ENCODE measurements at regions of chr7 and their contacts with region 1.

Region 1: DNA sequence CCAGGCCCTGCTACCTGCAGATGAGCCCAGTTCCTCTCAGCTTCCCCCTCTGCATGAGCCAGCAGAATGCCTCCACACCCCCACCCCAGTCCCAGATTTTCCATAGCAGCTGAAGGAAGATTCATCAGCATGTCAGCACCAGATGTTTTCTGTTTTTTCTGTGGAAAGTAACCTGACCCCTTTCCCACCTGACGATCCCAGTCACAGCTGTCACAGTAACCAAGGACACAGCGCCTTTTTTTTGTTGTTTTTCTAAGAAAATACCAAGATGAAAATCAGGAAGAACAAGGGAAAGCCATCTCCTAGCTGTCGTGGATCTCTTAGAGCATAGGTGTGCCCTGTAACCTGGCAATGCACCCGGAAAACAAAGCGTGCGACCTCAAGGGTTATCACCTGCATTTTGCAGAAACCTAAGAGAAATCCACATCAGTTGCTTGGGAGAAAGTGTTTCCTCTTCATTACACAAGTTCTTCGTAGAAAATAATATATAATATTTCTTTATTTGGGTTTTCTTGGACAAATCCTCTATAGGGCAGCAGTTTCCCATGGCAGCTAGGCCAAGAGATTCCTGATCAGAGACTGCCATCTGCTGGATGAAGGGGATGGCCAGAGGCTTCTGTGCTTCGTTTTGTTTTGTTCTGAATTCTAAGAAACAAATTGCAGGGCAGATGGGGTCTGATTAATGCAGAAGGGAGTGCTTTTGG is 401.9 kb downstream of the TNS3 start:
- DNase-seq: peak; percentile 42 to 70 (median 56)
- H3K4me3 ChIP-seq: no peak overlapping the region
- H3K27ac ChIP-seq: no peak overlapping the region
- H3K4me1 ChIP-seq: peaks cover 0 to 3% (median 0%) of the 10 kb centered on the region in 4 experiments
- H3K27me3 ChIP-seq: peaks cover 0 to 9% (median 0%) of the 10 kb centered on the region in 5 experiments

Region 2: GRCh38 chr7:45917658-45918057 is 1262.3 kb before region 1 on chr7:
- CTCF ChIA-PET with region 1: interaction called, 48 read pairs
- POLR2A ChIA-PET with region 1: no interaction called
- DNase-seq: peak; percentile 50 to 78 (median 68)
- H3K4me3 ChIP-seq: no peak overlapping the region
- H3K27ac ChIP-seq: no peak overlapping the region
- H3K4me1 ChIP-seq: peaks cover 0 to 22% (median 16%) of the 10 kb centered on the region in 4 experiments
- H3K27me3 ChIP-seq: peaks cover 18 to 75% (median 35%) of the 10 kb centered on the region in 5 experiments

Region 3: GRCh38 chr7:45923290-45923689 is 1256.7 kb before region 1 on chr7:
- CTCF ChIA-PET with region 1: interaction called, 48 read pairs
- POLR2A ChIA-PET with region 1: no interaction called
- DNase-seq: peak; percentile 59 to 79 (median 74)
- H3K4me3 ChIP-seq: peak overlapping the region in 1 of 7 experiments; percentile 45
- H3K27ac ChIP-seq: no peak overlapping the region
- H3K4me1 ChIP-seq: peaks cover 0 to 26% (median 17%) of the 10 kb centered on the region in 4 experiments
- H3K27me3 ChIP-seq: peaks cover 16 to 81% (median 48%) of the 10 kb centered on the region in 5 experiments